ENCODE measurements at regions of chr11 and their contacts with region 1.

Region 1: GRCh38 chr11:1202776-1203504 is 19.9 kb upstream of the MUC5B start:
- DNase-seq: peak; percentile 52 to 87 (median 86)
- ATAC-seq: peak; percentile 71 to 79
- H3K4me3 ChIP-seq: no peak overlapping the region
- H3K27ac ChIP-seq: no peak overlapping the region
- H3K4me1 ChIP-seq: no peaks in the 10 kb centered on the region
- H3K27me3 ChIP-seq: no peaks in the 10 kb centered on the region

Region 2: GRCh38 chr11:1422481-1422880 is 219.5 kb after region 1 on chr11:
- intact Hi-C with region 1: loop called in 1 of 4 experiments (anchors 10 kb)
- DNase-seq: no peak
- ATAC-seq: no peak
- H3K4me3 ChIP-seq: no peak overlapping the region
- H3K27ac ChIP-seq: no peak overlapping the region
- H3K4me1 ChIP-seq: no peaks in the 10 kb centered on the region
- H3K27me3 ChIP-seq: no peaks in the 10 kb centered on the region

Region 3: DNA sequence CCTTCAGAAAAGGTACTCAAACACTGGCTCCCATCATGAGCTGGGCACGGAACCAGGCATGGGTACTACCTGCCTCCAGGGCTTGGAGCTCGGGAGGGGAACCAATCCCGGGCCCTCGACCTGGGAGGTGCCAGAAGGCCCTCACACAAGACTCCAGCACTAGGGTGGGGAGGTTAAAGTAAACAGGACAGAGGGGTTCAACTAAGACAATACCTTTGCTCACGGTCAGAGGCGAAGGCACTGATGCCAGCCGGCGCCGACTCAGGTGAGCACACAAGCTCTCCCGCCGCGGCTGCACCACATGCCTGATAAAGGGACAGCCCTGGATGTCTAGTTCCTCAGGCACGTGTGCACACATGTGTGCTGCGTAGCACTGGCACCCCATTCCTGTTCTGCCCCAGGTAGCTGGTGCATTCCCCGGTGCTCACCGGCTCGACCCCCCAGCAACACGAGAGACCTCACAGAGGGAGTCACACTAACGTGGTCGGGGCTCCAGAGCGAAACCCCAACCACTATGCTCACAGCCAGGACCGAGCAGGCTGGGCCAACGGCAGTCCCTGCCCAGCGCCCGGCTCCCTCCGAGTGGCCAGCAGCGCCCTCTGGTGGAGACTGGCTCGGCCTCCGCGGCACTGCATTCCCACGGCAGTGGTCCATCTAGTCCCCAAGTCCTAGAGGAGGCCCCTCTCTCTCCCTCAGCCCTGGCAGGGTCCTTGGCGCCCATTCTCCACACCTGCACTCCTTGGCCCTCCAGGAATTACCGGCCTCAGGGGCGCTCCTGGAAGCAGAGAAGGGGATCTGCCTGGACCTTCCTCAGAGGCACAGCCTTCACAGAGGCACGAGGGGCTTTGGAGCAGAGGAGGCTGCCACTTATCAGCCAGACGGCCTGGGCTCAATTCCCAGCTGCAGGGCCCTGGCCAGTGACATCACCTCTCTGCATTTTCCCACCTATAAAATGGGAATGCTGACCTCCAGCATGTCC is 312.4 kb after region 1 on chr11:
- intact Hi-C with region 1: loop called (anchors 2 to 10 kb)
- DNase-seq: peak; percentile 80 to 94 (median 93)
- ATAC-seq: peak; percentile 85 to 88
- H3K4me3 ChIP-seq: no peak overlapping the region
- H3K27ac ChIP-seq: no peak overlapping the region
- H3K4me1 ChIP-seq: peaks cover 23% of the 10 kb centered on the region
- H3K27me3 ChIP-seq: no peaks in the 10 kb centered on the region

Region 4: GRCh38 chr11:1572197-1573076 is 369.5 kb after region 1 on chr11 and contains the start of gene DUSP8:
- intact Hi-C with region 1: loop called in 2 of 4 experiments (anchors 5 kb)
- DNase-seq: peak; percentile 94 to 98 (median 98)
- ATAC-seq: peak; percentile 79 to 85
- H3K4me3 ChIP-seq: peak within 1 kb of the TSS; percentile 93
- H3K27ac ChIP-seq: peak within 1 kb of the TSS; percentile 30
- H3K4me1 ChIP-seq: no peaks in the 10 kb centered on the region
- H3K27me3 ChIP-seq: no peaks in the 10 kb centered on the region
- total RNA-seq, gene DUSP8: 10.1 to 15.6 (median 12.3) TPM

Measured in right cardiac atrium (tissue), 5 donors.